OCI-LY7 (cell line): ENCODE measurements at regions of chr4 and their contacts with region 1.

Region 1: GRCh38 chr4:151362404-151363164 is 37.2 kb upstream of the SH3D19 start:
- DNase-seq: peak; percentile 76
- H3K4me3 ChIP-seq: no peak overlapping the region
- H3K27ac ChIP-seq: no peak overlapping the region
- H3K4me1 ChIP-seq: no peaks in the 10 kb centered on the region
- CTCF ChIP-seq: peak; percentile 96

Region 2: DNA sequence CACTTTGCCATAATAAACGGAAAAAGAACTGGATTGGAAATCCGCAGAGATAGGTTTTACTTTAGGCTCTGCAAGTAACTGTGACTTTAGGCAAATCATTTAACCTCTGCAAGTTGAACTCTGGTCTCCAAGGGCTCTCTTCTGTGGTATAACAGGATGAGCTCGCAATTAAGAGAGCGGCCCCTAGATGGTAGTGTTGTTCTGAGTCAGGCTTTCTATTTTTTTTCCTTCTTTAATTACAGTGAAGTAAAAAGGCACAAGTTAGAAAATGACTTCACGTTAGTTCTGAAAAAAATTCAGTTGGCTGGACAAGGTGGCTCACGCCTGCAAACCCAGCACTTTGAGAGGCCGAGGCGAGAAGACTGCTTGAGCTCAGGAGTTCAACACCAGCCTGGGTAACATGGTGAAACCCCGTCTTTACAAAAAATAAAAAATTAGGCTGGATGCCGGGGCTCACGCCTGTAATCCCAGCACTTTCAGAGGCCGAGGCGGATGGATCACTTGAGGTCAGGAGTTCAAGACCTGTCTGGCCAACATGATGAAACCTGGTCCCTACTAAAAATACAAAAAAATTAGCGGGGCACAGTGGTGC is 245.1 kb before region 1 on chr4:
- CTCF ChIA-PET with region 1: no interaction called
- POLR2A ChIA-PET with region 1: no interaction called
- intact Hi-C with region 1: loop called (anchors 5 kb)
- DNase-seq: peak; percentile 71
- H3K4me3 ChIP-seq: no peak overlapping the region
- H3K27ac ChIP-seq: no peak overlapping the region
- H3K4me1 ChIP-seq: peaks cover 5% of the 10 kb centered on the region
- CTCF ChIP-seq: peak; percentile 87

Region 3: DNA sequence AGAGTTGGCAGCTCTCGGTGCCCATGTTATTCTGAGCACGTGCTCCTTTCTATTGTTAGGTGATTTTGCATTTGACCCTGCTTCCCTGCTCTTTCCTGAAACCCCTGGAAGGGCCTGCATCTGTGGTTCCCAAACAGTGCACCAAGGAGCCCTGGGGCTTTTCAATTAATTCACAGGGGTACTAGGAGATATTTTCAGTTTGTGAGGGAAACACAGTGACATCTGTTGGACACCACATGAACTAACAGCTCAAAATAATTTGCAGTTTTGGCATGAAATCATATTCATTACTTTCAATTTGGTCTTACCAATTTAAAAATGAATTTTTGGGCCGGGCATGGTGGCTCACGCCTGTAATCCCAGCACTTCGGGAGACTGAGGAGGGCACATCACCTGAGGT is 241.7 kb after region 1 on chr4:
- CTCF ChIA-PET with region 1: no interaction called
- POLR2A ChIA-PET with region 1: no interaction called
- intact Hi-C with region 1: loop called (anchors 2 kb)
- DNase-seq: peak; percentile 37
- H3K4me3 ChIP-seq: no peak overlapping the region
- H3K27ac ChIP-seq: no peak overlapping the region
- H3K4me1 ChIP-seq: no peaks in the 10 kb centered on the region
- CTCF ChIP-seq: peak; percentile 76

Region 4: DNA sequence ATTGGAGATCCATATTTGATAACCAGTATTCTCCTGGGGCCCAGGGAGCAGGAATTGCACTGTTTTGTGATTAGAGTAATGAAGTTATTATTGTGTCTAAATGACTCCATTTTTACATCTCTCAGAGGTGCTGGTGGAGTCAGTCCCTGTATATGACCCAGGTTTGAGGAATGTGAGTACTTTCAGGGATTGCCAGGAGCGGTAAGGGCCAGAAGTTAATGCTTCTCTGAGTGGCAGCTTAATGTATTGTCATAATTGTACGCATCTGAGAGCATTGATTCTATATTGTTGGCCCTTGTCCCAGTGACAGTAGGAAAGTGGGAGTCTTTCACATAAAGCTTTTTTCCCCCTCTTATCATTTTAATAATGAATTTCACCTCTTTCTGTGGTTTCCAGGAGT is 252.0 kb after region 1 on chr4:
- CTCF ChIA-PET with region 1: no interaction called
- POLR2A ChIA-PET with region 1: no interaction called
- intact Hi-C with region 1: loop called (anchors 2 kb)
- DNase-seq: no peak
- H3K4me3 ChIP-seq: no peak overlapping the region
- H3K27ac ChIP-seq: no peak overlapping the region
- H3K4me1 ChIP-seq: no peaks in the 10 kb centered on the region
- CTCF ChIP-seq: no peak

Region 5: GRCh38 chr4:151760712-151761527 is 398.3 kb after region 1 on chr4 and contains the start of gene GATB:
- CTCF ChIA-PET with region 1: no interaction called
- POLR2A ChIA-PET with region 1: no interaction called
- intact Hi-C with region 1: loop called (anchors 10 kb)
- DNase-seq: peak; percentile 97
- H3K4me3 ChIP-seq: peak within 1 kb of the TSS; percentile 84
- H3K27ac ChIP-seq: peak within 1 kb of the TSS; percentile 31
- H3K4me1 ChIP-seq: peaks cover 15% of the 10 kb centered on the region
- CTCF ChIP-seq: peak; percentile 70
- total RNA-seq, gene GATB: 24.6 and 25.2 TPM in 2 replicates